HepG2 (cell line): ENCODE measurements at regions of chr6 and their contacts with region 1.

Region 1: GRCh38 chr6:99588618-99589289 is 17.9 kb upstream of the PRDM13 start:
- DNase-seq: peak; percentile 59
- ATAC-seq: peak; percentile 99
- H3K4me3 ChIP-seq: peak overlapping the region; percentile 51 to 79 (median 57)
- H3K27ac ChIP-seq: no peak overlapping the region
- H3K4me1 ChIP-seq: peaks cover 13% of the 10 kb centered on the region
- H3K27me3 ChIP-seq: peaks cover 5 to 47% of the 10 kb centered on the region in 2 experiments
- CTCF ChIP-seq: peak; percentile 88
- EP300 ChIP-seq: no peak
- POLR2A ChIP-seq: no peak
- RAD21 ChIP-seq: peak; percentile 84

Region 2: DNA sequence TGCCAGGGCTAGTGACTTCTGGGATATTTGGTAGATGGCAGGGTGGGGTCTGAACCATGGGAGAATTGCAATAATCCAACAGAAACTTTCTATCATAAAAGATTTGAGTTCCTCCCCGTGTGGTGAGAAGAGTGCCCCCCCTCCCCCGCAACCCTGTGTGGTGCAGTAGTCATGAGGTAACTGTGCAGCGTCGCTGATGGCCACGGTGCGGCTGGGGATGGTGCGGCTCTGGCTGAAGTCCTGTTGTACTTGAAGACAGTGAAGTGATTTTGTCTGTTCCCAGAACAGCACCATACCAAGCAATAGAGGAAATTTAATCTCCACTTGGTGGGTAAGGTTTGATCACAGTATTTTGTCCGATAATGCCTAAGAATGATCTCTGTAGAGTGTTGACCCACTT is 1409.1 kb before region 1 on chr6:
- CTCF ChIA-PET with region 1: no interaction called
- POLR2A ChIA-PET with region 1: no interaction called
- in situ Hi-C with region 1: no loop called
- intact Hi-C with region 1: no loop called
- DNase-seq: no peak
- ATAC-seq: no peak
- H3K4me3 ChIP-seq: no peak overlapping the region
- H3K27ac ChIP-seq: no peak overlapping the region
- H3K4me1 ChIP-seq: no peaks in the 10 kb centered on the region
- H3K27me3 ChIP-seq: no peaks in the 10 kb centered on the region; a peak in 1 of 5 replicates
- CTCF ChIP-seq: no peak
- EP300 ChIP-seq: no peak
- POLR2A ChIP-seq: no peak
- RAD21 ChIP-seq: no peak

Region 3: DNA sequence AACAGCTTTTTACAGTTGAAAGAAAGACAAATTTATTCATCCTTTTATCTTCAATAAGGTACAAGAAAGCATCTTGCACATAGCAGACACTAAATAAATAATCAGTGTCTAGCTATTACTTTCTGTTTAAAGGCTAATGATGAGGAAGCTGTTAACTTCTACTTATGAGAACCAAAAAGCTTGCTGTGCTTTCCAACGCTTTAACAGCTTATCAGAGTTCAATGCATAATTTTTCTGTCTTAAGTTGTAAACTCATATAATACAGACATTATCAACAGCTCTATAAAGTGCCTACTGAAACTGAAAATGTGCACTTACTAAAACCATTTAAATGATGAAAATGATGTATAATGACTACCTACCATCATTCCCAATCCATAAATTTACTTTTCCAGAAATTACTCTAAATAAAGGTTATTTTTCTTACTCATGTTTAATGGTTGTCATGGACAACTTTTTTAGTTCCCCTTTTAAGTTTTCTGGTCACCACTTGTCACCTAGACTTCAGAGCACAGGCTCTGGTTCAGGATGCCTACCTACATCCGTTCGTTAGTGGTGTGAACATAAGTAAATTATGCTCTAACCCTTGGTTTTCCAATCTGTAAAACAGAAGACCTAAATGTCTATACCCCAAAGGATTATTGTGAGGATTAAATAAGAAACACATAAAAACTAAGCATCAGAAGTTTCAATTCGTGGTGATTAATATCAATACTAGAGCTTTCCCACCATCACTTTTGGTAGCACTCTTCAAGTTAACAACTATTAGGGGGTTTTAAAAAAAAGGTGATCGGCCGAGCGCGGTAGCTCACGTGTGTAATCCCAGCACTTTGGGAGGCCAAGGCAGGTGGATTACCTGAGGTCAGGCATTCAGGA is 171.6 kb before region 1 on chr6:
- CTCF ChIA-PET with region 1: no interaction called
- POLR2A ChIA-PET with region 1: no interaction called
- in situ Hi-C with region 1: no loop called
- intact Hi-C with region 1: no loop called
- DNase-seq: no peak
- ATAC-seq: no peak
- H3K4me3 ChIP-seq: no peak overlapping the region
- H3K27ac ChIP-seq: no peak overlapping the region
- H3K4me1 ChIP-seq: peaks cover 13% of the 10 kb centered on the region
- H3K27me3 ChIP-seq: no peaks in the 10 kb centered on the region
- CTCF ChIP-seq: no peak
- EP300 ChIP-seq: no peak
- POLR2A ChIP-seq: no peak
- RAD21 ChIP-seq: no peak

Region 4: DNA sequence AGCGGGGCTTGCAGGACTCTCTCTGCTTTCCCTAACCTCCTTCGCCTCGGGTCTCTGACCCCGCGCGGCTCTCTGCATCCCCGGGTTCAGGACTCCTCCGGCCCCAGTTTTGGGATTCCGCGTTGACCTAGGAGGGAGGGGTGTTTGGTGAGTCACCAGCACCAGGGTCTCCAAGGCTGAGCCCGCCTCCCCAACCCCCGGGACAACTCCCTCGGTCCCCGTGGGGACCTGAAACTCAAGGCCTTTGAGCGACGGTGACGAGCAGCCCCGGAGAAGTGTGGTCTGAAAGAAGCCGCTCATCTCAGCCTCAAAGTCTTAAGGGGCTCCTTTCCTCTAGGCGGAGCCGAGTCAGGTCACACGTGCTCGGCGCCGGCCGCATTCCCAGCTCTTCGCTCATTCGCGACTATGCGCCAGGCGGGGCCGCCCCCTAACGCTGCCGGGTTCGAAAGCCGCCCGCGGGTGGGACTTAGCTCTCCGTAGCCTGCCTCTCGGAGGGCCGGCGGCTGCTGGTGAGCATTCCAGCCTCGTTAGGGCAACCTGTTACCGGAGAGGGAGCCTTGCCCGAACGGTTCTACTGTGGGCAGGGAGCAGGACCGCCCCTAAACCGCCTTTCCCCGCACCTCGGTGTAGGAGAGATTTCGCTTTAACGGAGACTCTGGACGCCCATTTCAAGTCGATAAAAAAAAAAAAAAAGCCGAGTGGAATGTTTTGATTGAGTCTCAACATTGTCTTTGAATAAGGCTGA is 14.8 kb after region 1 on chr6:
- CTCF ChIA-PET with region 1: no interaction called
- POLR2A ChIA-PET with region 1: no interaction called
- in situ Hi-C with region 1: no loop called
- intact Hi-C with region 1: loop called (anchors 2 kb)
- DNase-seq: no peak
- ATAC-seq: peak; percentile 83
- H3K4me3 ChIP-seq: peak overlapping the region; percentile 27 to 66 (median 47)
- H3K27ac ChIP-seq: no peak overlapping the region
- H3K4me1 ChIP-seq: peaks cover 21% of the 10 kb centered on the region
- H3K27me3 ChIP-seq: peaks cover 12 to 76% of the 10 kb centered on the region in 2 experiments; a peak in 4 of 5 replicates
- CTCF ChIP-seq: no peak
- EP300 ChIP-seq: no peak
- POLR2A ChIP-seq: no peak
- RAD21 ChIP-seq: no peak

Region 5: GRCh38 chr6:99822741-99823512 is 234.2 kb after region 1 on chr6:
- CTCF ChIA-PET with region 1: interaction called, 4 read pairs
- POLR2A ChIA-PET with region 1: no interaction called
- in situ Hi-C with region 1: loop called (anchors 10 kb)
- intact Hi-C with region 1: loop called (anchors 5 kb)
- DNase-seq: peak; percentile 64
- ATAC-seq: peak; percentile 99
- H3K4me3 ChIP-seq: peak overlapping the region in 1 of 3 experiments; percentile 23; a peak in 2 of 6 replicates
- H3K27ac ChIP-seq: no peak overlapping the region
- H3K4me1 ChIP-seq: peaks cover 7% of the 10 kb centered on the region
- H3K27me3 ChIP-seq: no peaks in the 10 kb centered on the region; a peak in 1 of 5 replicates
- CTCF ChIP-seq: peak; percentile 76
- EP300 ChIP-seq: no peak
- POLR2A ChIP-seq: no peak
- RAD21 ChIP-seq: peak; percentile 57